IMR-90 (cell line): ENCODE measurements at regions of chr14 and their contacts with region 1.

Region 1: DNA sequence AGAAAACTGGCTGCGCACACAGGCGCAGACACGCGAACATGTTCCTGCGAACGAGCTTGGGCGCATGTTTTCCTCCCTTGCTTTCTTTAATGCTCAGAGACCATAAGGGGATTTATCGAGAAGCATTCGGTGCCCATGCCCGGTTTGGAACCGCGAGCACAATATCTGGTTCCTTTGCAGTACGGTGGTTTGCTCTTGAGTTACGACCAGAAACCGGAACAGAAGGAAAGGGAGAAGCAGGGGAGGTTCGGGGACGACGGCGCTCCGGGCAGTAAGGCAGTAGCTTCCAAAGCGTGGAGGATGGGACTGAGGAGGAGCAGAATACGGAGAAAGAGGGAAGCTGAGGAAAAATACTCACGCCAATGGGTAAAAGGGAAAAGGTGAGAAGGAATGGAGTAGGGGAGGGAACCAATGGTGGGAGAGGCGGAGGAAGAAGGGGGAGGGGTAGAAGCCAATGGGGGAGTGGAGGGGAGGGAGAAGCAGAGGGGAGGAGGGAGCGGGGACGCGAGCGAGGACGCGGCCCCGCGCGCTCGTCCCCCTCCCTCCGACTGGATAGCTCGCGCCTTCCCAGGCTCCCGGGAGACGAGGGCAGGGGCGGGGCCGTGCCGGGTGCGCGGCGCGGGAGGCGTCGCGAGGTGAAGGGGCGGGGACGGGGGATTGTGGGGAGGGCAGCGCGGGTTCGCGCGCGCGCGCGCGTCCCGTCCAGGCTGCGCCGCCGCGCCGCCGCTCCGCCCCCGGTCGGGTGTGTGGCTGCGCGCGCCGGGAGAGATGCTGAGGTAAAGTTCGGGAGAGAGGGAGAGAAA is 625 bp upstream of the ARHGAP5 start:
- DNase-seq: peak; percentile 95
- ATAC-seq: peak; percentile 90
- H3K4me3 ChIP-seq: peak overlapping the region; percentile 78
- H3K27ac ChIP-seq: peak overlapping the region; percentile 89
- H3K4me1 ChIP-seq: no peaks in the 10 kb centered on the region
- H3K27me3 ChIP-seq: no peaks in the 10 kb centered on the region
- CTCF ChIP-seq: no peak
- POLR2A ChIP-seq: peak; percentile 35; the same call in 1 of the 2 replicates
- RAD21 ChIP-seq: no peak

Region 2: GRCh38 chr14:31926123-31926522 is 150.4 kb before region 1 on chr14:
- CTCF ChIA-PET with region 1: interaction called, 3 read pairs
- POLR2A ChIA-PET with region 1: no interaction called
- dilution Hi-C with region 1: no loop called
- in situ Hi-C with region 1: no loop called
- intact Hi-C with region 1: loop called (anchors 2 kb)
- DNase-seq: peak; percentile 53
- ATAC-seq: no peak
- H3K4me3 ChIP-seq: no peak overlapping the region
- H3K27ac ChIP-seq: no peak overlapping the region
- H3K4me1 ChIP-seq: peaks cover 8% of the 10 kb centered on the region
- H3K27me3 ChIP-seq: no peaks in the 10 kb centered on the region
- CTCF ChIP-seq: peak; percentile 51
- POLR2A ChIP-seq: no peak
- RAD21 ChIP-seq: peak; percentile 44

Region 3: GRCh38 chr14:32202998-32203882 is 126.8 kb after region 1 on chr14 and contains the start of gene RNU6-8:
- CTCF ChIA-PET with region 1: no interaction called
- POLR2A ChIA-PET with region 1: no interaction called
- dilution Hi-C with region 1: no loop called
- in situ Hi-C with region 1: no loop called
- intact Hi-C with region 1: loop called (anchors 2 kb)
- DNase-seq: peak; percentile 79
- ATAC-seq: peak; percentile 91
- H3K4me3 ChIP-seq: peak within 1 kb of the TSS; percentile 67
- H3K27ac ChIP-seq: peak within 1 kb of the TSS; percentile 78
- H3K4me1 ChIP-seq: no peaks in the 10 kb centered on the region
- H3K27me3 ChIP-seq: peaks cover 3% of the 10 kb centered on the region
- CTCF ChIP-seq: no peak
- POLR2A ChIP-seq: no peak
- RAD21 ChIP-seq: no peak
- total RNA-seq, gene RNU6-8: not detected in 2 replicates

Region 4: GRCh38 chr14:32469388-32470160 is 393.1 kb after region 1 on chr14:
- CTCF ChIA-PET with region 1: no interaction called
- POLR2A ChIA-PET with region 1: interaction called, 3 read pairs
- dilution Hi-C with region 1: no loop called
- in situ Hi-C with region 1: loop called (anchors 5 kb)
- intact Hi-C with region 1: loop called (anchors 1 kb)
- DNase-seq: peak; percentile 76
- ATAC-seq: peak; percentile 55
- H3K4me3 ChIP-seq: no peak overlapping the region
- H3K27ac ChIP-seq: peak overlapping the region; percentile 12; the same call in 1 of the 2 replicates
- H3K4me1 ChIP-seq: peaks cover 20% of the 10 kb centered on the region
- H3K27me3 ChIP-seq: no peaks in the 10 kb centered on the region
- CTCF ChIP-seq: peak; percentile 72
- POLR2A ChIP-seq: no peak
- RAD21 ChIP-seq: peak; percentile 78